Activated CD8-positive, alpha-beta memory T cell treated with anti-CD3 and anti-CD28 coated beads, Interleukin-2, amount 10 ng/mL, durations not matched to agents 7 days and 5 days (primary cell): ENCODE measurements at regions of chr19 and their contacts with region 1.

Region 1: GRCh38 chr19:10835754-10836477 is at the start of gene TMED1:
- DNase-seq: peak; percentile 99
- ATAC-seq: peak; percentile 92
- H3K4me3 Mint-ChIP-seq: peak within 1 kb of the TSS; percentile 88
- H3K27ac Mint-ChIP-seq: peak within 1 kb of the TSS; percentile 96
- H3K4me1 Mint-ChIP-seq: peaks cover 18% of the 10 kb centered on the region
- H3K27me3 Mint-ChIP-seq: no peaks in the 10 kb centered on the region
- total RNA-seq, gene TMED1: 16.0 to 19.2 TPM

Region 2: GRCh38 chr19:10742476-10742875 is 93.4 kb before region 1 on chr19:
- CTCF ChIA-PET with region 1: no interaction called
- DNase-seq: no peak
- ATAC-seq: no peak
- H3K4me3 Mint-ChIP-seq: no peak overlapping the region
- H3K27ac Mint-ChIP-seq: no peak overlapping the region
- H3K4me1 Mint-ChIP-seq: peaks cover 41% of the 10 kb centered on the region
- H3K27me3 Mint-ChIP-seq: no peaks in the 10 kb centered on the region

Region 3: GRCh38 chr19:10776900-10777650 is 58.8 kb before region 1 on chr19:
- CTCF ChIA-PET with region 1: no interaction called
- DNase-seq: no peak
- ATAC-seq: no peak
- H3K4me3 Mint-ChIP-seq: no peak overlapping the region
- H3K27ac Mint-ChIP-seq: peak overlapping the region; percentile 71
- H3K4me1 Mint-ChIP-seq: peaks cover 40% of the 10 kb centered on the region
- H3K27me3 Mint-ChIP-seq: no peaks in the 10 kb centered on the region

Region 4: DNA sequence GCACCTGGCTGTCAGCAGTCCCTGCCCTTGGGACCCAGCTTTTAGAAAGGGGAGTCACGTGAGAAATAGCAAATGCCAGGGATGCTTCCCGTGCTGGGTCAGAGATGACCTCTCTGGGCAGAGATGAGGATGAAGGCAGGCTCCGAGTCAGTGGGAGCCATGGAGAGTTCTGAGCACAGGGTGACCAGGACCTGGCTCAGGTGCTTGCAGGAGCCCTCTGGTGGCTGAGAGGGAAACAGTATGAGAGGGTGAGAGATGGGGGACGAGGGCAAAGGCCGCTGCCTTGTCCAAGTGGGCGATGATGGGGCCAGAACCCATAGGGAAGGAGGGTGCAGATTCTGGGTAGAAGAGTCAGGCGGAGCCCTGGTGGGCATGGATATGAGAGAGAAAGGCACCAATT is 15.7 kb before region 1 on chr19:
- CTCF ChIA-PET with region 1: interaction called, 11 read pairs
- DNase-seq: no peak
- ATAC-seq: no peak
- H3K4me3 Mint-ChIP-seq: no peak overlapping the region
- H3K27ac Mint-ChIP-seq: no peak overlapping the region
- H3K4me1 Mint-ChIP-seq: peaks cover 28% of the 10 kb centered on the region
- H3K27me3 Mint-ChIP-seq: no peaks in the 10 kb centered on the region

Region 5: DNA sequence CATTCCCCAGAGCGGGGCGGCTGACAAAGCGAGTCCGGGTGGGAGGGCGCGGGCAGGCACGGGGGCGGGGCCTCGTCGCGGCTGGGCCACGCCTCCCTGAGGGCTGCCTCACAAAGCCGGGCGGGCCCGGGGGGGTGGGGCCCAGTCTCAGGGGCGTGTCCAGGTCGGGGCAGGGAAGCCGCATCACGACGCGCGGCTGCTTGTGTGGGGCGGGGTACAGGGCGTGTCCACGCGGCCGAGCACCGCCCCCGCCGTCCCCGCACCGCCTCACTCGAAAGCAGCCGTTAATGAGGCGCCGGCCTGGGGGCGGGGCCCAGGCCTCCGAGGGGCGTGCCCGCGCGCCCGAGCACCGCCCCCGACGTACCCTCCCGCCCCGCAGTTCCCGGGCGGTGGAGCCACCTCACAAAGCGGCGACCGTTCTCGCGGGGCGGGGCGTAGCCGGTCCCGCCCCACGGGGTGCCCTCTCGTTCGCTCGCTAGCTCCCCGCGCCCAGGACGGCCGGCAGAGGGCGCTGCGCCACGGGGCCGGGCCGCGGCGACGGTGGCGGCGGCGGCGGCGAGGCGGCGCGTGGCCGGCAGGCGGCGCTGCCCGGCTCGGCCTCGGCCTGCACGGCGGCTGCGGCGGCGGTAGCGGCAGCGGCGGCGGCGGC is 35.2 kb after region 1 on chr19 and contains the start of gene CARM1:
- CTCF ChIA-PET with region 1: interaction called, 50 read pairs
- DNase-seq: peak; percentile 99
- ATAC-seq: peak; percentile 89
- H3K4me3 Mint-ChIP-seq: peak within 1 kb of the TSS; percentile 79
- H3K27ac Mint-ChIP-seq: peak within 1 kb of the TSS; percentile 84
- H3K4me1 Mint-ChIP-seq: peaks cover 29% of the 10 kb centered on the region
- H3K27me3 Mint-ChIP-seq: no peaks in the 10 kb centered on the region
- total RNA-seq, gene CARM1: 38.5 to 48.1 TPM